ENCODE measurements at regions of chr5 and their contacts with region 1.

Region 1: GRCh38 chr5:134586866-134587524 is 45.6 kb downstream of the SAR1B start:
- DNase-seq: peak; percentile 84 to 91 (median 89)
- ATAC-seq: peak; percentile 85
- H3K4me3 ChIP-seq: no peak overlapping the region
- H3K4me1 ChIP-seq: no peaks in the 10 kb centered on the region
- CTCF ChIP-seq: peak; percentile 46

Region 2: DNA sequence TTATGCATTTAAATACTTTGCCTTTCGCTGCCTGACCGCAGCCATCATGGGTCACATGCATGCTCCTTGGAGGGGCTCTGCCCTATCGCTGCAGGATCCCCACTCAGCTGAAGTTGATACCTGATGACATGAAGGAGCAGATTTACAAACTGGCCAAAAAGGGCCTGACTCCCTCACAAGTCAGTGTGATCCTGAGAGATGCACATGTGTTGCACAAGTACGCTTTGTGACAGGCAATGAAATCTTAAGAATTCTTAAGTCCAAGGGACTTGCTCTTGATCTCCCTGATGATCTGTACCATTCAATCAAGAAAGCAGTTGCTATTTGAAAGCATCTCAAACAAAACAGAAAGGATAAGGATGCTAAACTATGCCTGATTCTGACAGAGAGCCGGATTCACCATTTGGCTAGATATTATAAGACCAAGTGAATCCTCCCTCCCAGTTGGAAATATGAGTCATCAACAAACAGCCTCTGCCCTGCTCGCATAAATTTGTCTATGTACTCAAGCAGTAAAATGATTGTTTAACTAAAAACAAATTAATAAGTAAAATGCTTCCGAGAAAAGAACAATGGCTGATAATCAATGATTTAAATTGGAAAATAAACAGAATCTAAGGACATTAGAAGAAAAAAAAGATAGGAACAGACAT is 319.5 kb before region 1 on chr5:
- intact Hi-C with region 1: no loop called
- DNase-seq: no peak
- ATAC-seq: no peak
- H3K4me3 ChIP-seq: no peak overlapping the region
- H3K4me1 ChIP-seq: no peaks in the 10 kb centered on the region
- CTCF ChIP-seq: no peak

Region 3: GRCh38 chr5:134304311-134304710 is 282.7 kb before region 1 on chr5:
- intact Hi-C with region 1: loop called (anchors 5 kb)
- DNase-seq: no peak
- ATAC-seq: no peak
- H3K4me3 ChIP-seq: no peak overlapping the region
- H3K4me1 ChIP-seq: peaks cover 5% of the 10 kb centered on the region
- CTCF ChIP-seq: no peak

Region 4: DNA sequence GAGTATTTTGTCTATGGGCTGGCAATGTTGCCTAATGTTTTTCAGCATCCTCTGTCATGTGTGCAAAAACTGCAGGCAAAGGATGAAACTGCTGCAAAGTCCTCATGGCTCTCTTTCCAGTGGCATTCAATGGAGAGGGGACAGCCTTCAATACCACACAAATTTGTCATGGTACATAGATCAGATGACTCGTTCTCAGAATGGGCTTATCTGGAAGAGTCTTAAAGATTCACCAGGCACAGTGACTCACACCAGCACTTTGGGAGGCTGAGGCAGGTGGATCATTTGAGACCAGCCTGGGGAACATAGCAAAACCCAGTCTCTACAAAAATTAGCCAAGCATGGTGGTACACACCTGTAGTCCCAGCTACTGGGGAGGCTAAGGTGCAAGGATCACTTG is 180.6 kb before region 1 on chr5:
- intact Hi-C with region 1: loop called in 1 of 2 experiments (anchors 10 kb)
- DNase-seq: no peak
- ATAC-seq: no peak
- H3K4me3 ChIP-seq: no peak overlapping the region
- H3K4me1 ChIP-seq: peaks cover 10% of the 10 kb centered on the region
- CTCF ChIP-seq: no peak

Region 5: DNA sequence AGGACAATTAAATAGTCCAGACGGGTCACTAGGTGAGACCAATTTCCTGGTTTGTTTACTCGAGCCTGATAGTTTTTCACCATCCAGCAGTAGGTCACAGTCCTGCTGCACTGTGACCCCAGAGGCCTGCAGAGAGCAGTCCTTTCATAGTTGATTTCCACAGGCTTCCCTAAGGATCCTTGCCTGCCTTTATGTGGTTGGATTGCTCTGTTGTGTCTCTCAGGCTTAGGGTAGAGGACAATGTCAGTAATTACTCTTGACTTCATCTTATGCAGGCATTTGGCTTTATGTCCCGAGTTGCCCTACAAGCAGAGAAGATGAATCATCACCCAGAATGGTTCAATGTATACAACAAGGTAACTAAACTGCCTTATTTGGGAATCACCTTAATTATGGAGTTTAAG is 371.8 kb after region 1 on chr5:
- intact Hi-C with region 1: no loop called
- DNase-seq: no peak
- ATAC-seq: peak; percentile 51
- H3K4me3 ChIP-seq: no peak overlapping the region
- H3K4me1 ChIP-seq: no peaks in the 10 kb centered on the region
- CTCF ChIP-seq: no peak

Region 6: GRCh38 chr5:134969166-134969784 is 382.3 kb after region 1 on chr5:
- intact Hi-C with region 1: no loop called
- DNase-seq: no peak
- ATAC-seq: no peak
- H3K4me3 ChIP-seq: no peak overlapping the region
- H3K4me1 ChIP-seq: no peaks in the 10 kb centered on the region
- CTCF ChIP-seq: no peak

Measured in mucosa of descending colon (tissue), 3 donors.